Left lung (tissue), 14 donors: ENCODE measurements at regions of chr1 and their contacts with region 1.

Region 1: GRCh38 chr1:86833461-86834215 is 80.3 kb downstream of the SELENOF start:
- DNase-seq: peak in 3 of 4 donors; percentile 63 to 83 (median 65)
- ATAC-seq: peak; percentile 98
- H3K4me3 ChIP-seq: no peak overlapping the region
- H3K27ac ChIP-seq: no peak overlapping the region
- H3K4me1 ChIP-seq: peaks cover 0 to 6% of the 10 kb centered on the region in 2 donors
- H3K27me3 ChIP-seq: no peaks in the 10 kb centered on the region
- CTCF ChIP-seq: peak; percentile 44 to 51

Region 2: DNA sequence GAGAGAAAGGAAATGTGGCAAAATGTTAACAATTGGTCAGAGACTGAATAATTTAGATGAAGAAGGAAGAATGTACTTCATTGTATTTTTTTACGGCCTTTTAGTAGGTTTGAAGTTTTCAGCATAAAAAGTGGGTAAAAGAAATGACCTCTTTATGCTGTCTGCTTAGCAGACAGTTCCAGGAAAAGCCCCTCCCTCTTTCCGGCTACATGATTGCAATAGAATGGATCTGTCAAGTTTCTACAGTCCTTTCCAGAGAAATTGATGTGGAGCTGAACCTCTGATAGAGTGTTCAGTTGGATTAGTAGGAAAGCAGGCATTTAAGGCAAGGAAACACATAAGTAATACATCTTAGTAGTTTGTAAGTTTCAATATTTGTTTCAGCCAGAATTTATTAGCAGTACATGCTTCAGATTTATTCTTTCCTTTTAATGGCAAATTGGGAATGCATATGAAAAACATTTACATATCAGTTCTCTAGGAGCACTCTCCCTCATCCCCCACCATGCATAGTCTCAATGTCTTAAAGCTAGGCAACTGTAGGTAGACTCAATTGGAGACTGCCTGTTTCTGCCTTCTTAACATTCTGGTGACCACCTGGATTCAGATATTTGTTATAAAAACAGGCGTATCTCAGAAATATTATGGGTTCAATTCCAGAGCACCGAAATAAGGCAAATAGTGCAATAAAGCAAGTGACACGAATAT is 117.2 kb after region 1 on chr1:
- intact Hi-C with region 1: loop called in 1 of 2 experiments (anchors 10 kb)
- DNase-seq: peak in 1 of 4 donors; percentile 25
- ATAC-seq: no peak
- H3K4me3 ChIP-seq: no peak overlapping the region
- H3K27ac ChIP-seq: no peak overlapping the region
- H3K4me1 ChIP-seq: no peaks in the 10 kb centered on the region
- H3K27me3 ChIP-seq: no peaks in the 10 kb centered on the region
- CTCF ChIP-seq: no peak

Region 3: GRCh38 chr1:87045761-87046304 is 212.2 kb after region 1 on chr1:
- intact Hi-C with region 1: no loop called
- DNase-seq: no peak
- ATAC-seq: no peak
- H3K4me3 ChIP-seq: no peak overlapping the region
- H3K27ac ChIP-seq: no peak overlapping the region
- H3K4me1 ChIP-seq: no peaks in the 10 kb centered on the region
- H3K27me3 ChIP-seq: no peaks in the 10 kb centered on the region
- CTCF ChIP-seq: no peak

Region 4: DNA sequence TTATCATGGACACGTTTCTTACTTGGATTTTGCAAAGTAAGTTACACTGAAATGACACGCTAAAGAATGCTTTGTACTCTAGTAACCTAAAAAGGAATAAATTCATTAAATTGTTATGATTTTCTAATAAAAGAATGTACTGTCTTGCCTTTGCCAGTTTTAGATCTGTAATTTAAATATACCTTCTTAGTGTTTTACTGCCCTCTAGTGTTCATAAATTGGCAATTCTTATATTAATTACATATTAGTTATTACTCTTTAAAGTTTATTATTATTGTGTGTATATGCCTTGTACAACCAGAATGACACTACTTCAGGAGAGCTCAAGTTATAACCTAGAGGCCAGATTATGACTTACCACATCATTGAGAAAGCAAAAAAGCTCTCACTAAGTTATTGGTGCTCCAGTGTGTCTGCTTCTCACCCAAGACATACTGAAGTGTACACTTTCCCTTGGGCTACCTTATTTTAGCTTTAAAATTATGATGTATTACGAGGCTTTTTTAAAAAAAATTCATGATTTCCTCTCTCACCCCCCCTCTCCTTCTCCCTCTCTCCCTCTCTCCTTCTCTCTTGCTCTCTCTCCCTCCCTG is 250.7 kb after region 1 on chr1:
- intact Hi-C with region 1: loop called in 1 of 2 experiments (anchors 5 kb)
- DNase-seq: peak in 2 of 4 donors; percentile 35 to 43
- ATAC-seq: peak; percentile 76
- H3K4me3 ChIP-seq: no peak overlapping the region
- H3K27ac ChIP-seq: no peak overlapping the region
- H3K4me1 ChIP-seq: no peaks in the 10 kb centered on the region
- H3K27me3 ChIP-seq: no peaks in the 10 kb centered on the region
- CTCF ChIP-seq: peak; percentile 47 to 57